ENCODE measurements at regions of chr4 and their contacts with region 1.

Region 1: DNA sequence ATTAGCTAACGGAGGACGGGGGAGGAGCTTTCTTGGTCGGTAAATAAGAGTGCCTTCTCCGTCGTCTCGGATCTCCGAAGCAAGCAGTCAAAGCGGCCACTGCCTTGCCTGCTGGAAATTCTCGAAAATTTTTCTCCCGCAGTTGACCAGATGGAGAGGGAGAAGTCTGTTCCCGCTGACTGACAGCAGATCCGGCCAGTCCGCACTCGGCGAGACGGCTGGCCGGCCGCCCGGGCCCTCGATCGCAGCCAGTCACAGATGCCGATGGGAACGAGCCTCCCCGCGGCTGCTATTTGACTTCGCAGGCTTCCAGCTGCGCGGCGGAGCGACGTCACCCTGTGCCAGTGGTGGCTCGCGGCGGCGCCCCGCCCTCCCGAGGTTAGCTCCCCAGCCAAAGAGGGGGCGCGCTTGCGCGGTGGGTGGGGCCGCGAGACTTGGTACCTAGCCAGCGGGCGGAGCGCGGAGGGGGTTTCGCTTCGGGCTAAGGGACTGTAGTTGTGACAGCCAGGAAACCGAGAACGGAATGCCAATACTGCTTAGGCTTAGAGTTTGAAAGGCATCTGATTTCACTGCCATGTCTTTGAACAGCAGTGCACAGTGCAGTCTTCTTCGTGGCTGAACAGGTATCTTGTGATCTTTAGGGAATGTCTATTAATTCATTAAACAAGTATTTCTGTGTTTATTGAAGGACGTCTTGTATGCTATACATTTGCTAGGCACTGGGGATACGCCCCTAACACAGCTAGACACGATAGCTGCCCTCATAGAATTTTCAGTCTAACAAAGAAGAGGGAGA is at the start of gene PPM1K:
- DNase-seq: peak; percentile 99 to 100 (median 99)
- ATAC-seq: peak; percentile 82
- H3K4me3 ChIP-seq: peak within 1 kb of the TSS; percentile 79 to 99
- H3K4me3 Mint-ChIP-seq: peak within 1 kb of the TSS; percentile 84
- H3K27ac ChIP-seq: peak within 1 kb of the TSS; percentile 97 to 99
- H3K27ac Mint-ChIP-seq: peak within 1 kb of the TSS; percentile 94
- H3K4me1 ChIP-seq: peaks cover 39% of the 10 kb centered on the region
- H3K4me1 Mint-ChIP-seq: peaks cover 46% of the 10 kb centered on the region
- H3K27me3 ChIP-seq: no peaks in the 10 kb centered on the region
- H3K27me3 Mint-ChIP-seq: no peaks in the 10 kb centered on the region
- CTCF ChIP-seq: no peak
- total RNA-seq, gene PPM1K: 59.8 to 61.0 TPM

Region 2: GRCh38 chr4:86934771-86935565 is 1349.7 kb before region 1 on chr4 and contains the start of gene AFF1:
- CTCF ChIA-PET with region 1: no interaction called
- POLR2A ChIA-PET with region 1: interaction called, 3 read pairs
- intact Hi-C with region 1: loop called (anchors 5 to 10 kb)
- DNase-seq: peak; percentile 74 to 97 (median 85)
- ATAC-seq: peak; percentile 71
- H3K4me3 ChIP-seq: peak within 1 kb of the TSS; percentile 76 to 87
- H3K4me3 Mint-ChIP-seq: peak within 1 kb of the TSS; percentile 88
- H3K27ac ChIP-seq: peak within 1 kb of the TSS; percentile 81 to 85
- H3K27ac Mint-ChIP-seq: peak within 1 kb of the TSS; percentile 95
- H3K4me1 ChIP-seq: peaks cover 42% of the 10 kb centered on the region
- H3K4me1 Mint-ChIP-seq: peaks cover 50% of the 10 kb centered on the region
- H3K27me3 ChIP-seq: no peaks in the 10 kb centered on the region
- H3K27me3 Mint-ChIP-seq: no peaks in the 10 kb centered on the region
- CTCF ChIP-seq: peak; percentile 44
- total RNA-seq, gene AFF1: 32.3 to 33.8 TPM

Region 3: DNA sequence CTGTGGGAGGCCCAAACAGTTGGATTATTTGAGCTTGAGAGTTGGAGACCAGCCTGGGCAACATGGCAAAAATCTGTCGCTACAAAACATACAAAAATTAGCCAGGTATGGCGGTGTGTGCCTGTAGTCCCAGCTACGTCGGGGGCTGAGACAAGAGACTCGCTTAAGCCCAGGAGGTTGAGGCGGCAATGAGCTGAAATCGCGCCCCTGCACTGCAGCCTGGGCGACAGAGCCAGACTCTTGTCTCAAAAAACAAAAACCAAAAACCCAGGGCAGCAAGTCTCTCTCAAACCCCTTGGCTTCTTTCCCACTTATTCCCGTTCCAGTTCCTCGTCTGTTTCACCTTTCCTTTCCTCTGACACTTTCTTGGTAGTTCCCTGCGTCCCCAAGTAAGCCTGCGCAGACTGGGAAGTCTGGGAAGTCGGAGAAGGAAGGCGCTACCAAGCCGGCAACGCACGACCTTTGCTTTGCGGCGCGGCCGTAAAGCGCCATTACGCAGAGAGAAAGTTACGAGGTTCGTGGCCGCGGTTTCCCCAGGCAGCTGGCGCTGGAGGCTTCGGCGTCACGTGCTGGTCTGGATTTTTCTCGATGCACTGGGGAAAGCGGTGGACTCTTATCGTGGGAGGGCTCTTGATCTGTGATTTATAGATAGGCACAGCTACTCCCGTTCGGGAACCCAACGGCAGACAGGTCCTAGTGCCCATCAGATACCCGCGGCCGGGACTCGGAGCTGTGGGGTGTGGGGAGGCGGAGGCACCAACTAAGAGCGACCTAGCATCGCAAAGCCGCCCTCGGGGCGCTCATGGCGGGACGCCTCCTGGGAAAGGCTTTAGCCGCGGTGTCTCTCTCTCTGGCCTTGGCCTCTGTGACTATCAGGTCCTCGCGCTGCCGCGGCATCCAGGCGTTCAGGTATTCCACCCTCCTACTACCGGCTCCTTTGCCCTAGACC is 862.3 kb before region 1 on chr4 and contains the start of gene NUDT9:
- CTCF ChIA-PET with region 1: no interaction called
- POLR2A ChIA-PET with region 1: interaction called, 4 read pairs
- intact Hi-C with region 1: loop called in 1 of 2 experiments (anchors 5 kb)
- DNase-seq: peak; percentile 76 to 94 (median 86)
- ATAC-seq: peak; percentile 82
- H3K4me3 ChIP-seq: peak within 1 kb of the TSS; percentile 76 to 94
- H3K4me3 Mint-ChIP-seq: peak within 1 kb of the TSS; percentile 98
- H3K27ac ChIP-seq: peak within 1 kb of the TSS; percentile 86 to 92
- H3K27ac Mint-ChIP-seq: peak within 1 kb of the TSS; percentile 99
- H3K4me1 ChIP-seq: peaks cover 18% of the 10 kb centered on the region
- H3K4me1 Mint-ChIP-seq: peaks cover 39% of the 10 kb centered on the region
- H3K27me3 ChIP-seq: no peaks in the 10 kb centered on the region
- H3K27me3 Mint-ChIP-seq: no peaks in the 10 kb centered on the region
- CTCF ChIP-seq: no peak
- total RNA-seq, gene NUDT9: 4.9 to 6.4 TPM

Region 4: GRCh38 chr4:88320780-88321373 is 36.2 kb after region 1 on chr4:
- CTCF ChIA-PET with region 1: no interaction called
- POLR2A ChIA-PET with region 1: interaction called, 23 read pairs
- intact Hi-C with region 1: loop called in 1 of 2 experiments (anchors 1 kb)
- DNase-seq: peak in 8 of 9 experiments; percentile 7 to 62 (median 26)
- ATAC-seq: peak; percentile 75
- H3K4me3 ChIP-seq: peak overlapping the region in 1 of 2 experiments; percentile 10
- H3K4me3 Mint-ChIP-seq: peak overlapping the region; percentile 84
- H3K27ac ChIP-seq: peak overlapping the region in 1 of 2 experiments; percentile 70
- H3K27ac Mint-ChIP-seq: peak overlapping the region; percentile 95
- H3K4me1 ChIP-seq: peaks cover 18% of the 10 kb centered on the region
- H3K4me1 Mint-ChIP-seq: peaks cover 22% of the 10 kb centered on the region
- H3K27me3 ChIP-seq: no peaks in the 10 kb centered on the region
- H3K27me3 Mint-ChIP-seq: no peaks in the 10 kb centered on the region
- CTCF ChIP-seq: no peak

Region 5: DNA sequence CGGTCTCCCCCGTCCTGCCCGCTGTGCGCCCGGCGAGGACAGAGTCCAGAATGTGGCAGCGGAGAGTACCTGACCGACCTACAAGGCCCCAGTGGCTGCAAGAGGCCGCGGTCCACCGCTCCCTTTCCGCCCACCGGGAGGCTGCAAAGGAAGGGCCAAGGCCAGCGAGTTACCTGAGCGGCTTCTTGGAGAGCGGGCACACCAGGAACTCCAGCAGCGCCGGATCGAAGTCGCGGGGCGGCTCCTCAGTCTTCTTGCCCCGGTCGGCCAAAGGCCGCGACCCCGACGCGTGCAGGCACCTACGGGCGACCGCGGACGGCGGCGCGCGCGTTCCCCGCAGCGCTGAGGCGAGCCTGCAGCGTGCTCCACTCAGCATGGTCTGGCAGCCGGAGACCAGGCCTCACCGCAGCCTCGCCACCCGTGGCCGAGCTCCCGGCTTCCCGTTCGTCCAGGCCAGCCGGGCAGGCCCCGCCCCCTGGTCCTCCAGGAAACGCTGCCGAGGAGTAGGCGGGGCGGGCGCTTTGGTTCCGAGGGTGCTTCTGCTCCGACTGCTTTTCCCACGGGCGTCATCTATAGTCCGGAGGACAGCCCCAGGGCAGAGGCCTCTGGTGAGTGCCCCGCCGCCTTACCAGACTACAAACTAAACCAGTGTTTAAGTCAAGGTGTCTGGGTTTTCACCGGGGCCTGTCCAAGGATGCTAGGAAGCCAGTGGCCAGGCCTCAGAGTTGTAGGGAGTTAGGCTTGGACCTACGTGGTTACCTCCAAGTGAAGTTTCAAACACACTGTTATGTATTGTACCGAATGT is 238.9 kb after region 1 on chr4 and contains the start of gene PYURF:
- CTCF ChIA-PET with region 1: interaction called, 3 read pairs
- POLR2A ChIA-PET with region 1: interaction called, 3 read pairs
- intact Hi-C with region 1: loop called (anchors 2 kb)
- DNase-seq: peak; percentile 31 to 87 (median 75)
- ATAC-seq: peak; percentile 76
- H3K4me3 ChIP-seq: peak within 1 kb of the TSS; percentile 78 to 90
- H3K4me3 Mint-ChIP-seq: peak within 1 kb of the TSS; percentile 93
- H3K27ac ChIP-seq: peak within 1 kb of the TSS; percentile 54 to 76
- H3K27ac Mint-ChIP-seq: peak within 1 kb of the TSS; percentile 94
- H3K4me1 ChIP-seq: peaks cover 16% of the 10 kb centered on the region
- H3K4me1 Mint-ChIP-seq: peaks cover 43% of the 10 kb centered on the region
- H3K27me3 ChIP-seq: no peaks in the 10 kb centered on the region
- H3K27me3 Mint-ChIP-seq: no peaks in the 10 kb centered on the region
- CTCF ChIP-seq: no peak
- total RNA-seq, gene PYURF: 25.5 to 27.6 TPM

Region 6: GRCh38 chr4:88613417-88613875 is 328.8 kb after region 1 on chr4:
- CTCF ChIA-PET with region 1: no interaction called
- POLR2A ChIA-PET with region 1: interaction called, 8 read pairs
- intact Hi-C with region 1: loop called in 1 of 2 experiments (anchors 2 kb)
- DNase-seq: peak in 8 of 9 experiments; percentile 18 to 88 (median 49)
- ATAC-seq: peak; percentile 92
- H3K4me3 ChIP-seq: peak overlapping the region; percentile 16 to 19
- H3K4me3 Mint-ChIP-seq: peak overlapping the region; percentile 78
- H3K27ac ChIP-seq: peak overlapping the region; percentile 64 to 81
- H3K27ac Mint-ChIP-seq: peak overlapping the region; percentile 96
- H3K4me1 ChIP-seq: peaks cover 52% of the 10 kb centered on the region
- H3K4me1 Mint-ChIP-seq: peaks cover 87% of the 10 kb centered on the region
- H3K27me3 ChIP-seq: no peaks in the 10 kb centered on the region
- H3K27me3 Mint-ChIP-seq: no peaks in the 10 kb centered on the region
- CTCF ChIP-seq: no peak

Region 7: DNA sequence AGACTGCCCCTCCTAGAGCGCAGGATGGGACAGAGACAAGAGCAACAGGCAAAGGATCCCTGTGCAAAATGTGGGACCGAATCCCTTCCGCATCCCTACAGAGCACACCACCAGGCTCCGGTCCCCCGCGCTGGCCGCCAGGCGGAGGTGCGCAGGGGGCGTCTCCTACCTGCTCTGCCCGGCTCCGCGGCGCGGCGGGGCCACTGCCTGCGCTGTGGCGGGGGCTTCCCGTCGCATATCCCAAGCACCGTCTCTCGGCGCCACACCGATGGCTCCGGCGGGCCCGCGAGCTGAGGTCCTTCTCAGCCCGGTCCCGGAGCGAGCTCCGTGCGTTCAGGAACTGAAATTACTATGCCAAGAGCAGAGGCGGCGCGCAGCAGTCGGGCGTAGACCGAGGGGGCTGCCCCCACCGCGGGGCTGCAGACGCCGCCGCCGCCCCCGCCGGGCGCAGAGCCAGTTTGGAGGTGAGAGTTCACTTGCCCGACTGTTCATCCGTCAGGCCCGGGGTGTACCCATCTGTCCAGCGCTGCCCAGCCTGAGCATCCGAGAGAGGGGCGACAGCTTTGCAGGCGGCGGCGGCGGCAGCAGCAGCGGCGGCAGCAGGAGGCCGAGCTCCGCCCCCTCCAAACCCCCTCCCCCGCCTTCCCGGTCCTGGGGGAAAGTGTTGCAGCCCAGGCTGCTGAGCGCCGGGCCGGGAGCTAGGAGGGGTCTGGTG is 1023.0 kb after region 1 on chr4 and contains the start of gene GPRIN3:
- CTCF ChIA-PET with region 1: no interaction called
- POLR2A ChIA-PET with region 1: no interaction called
- intact Hi-C with region 1: loop called in 1 of 2 experiments (anchors 10 kb)
- DNase-seq: peak; percentile 39 to 83 (median 68)
- ATAC-seq: peak; percentile 63
- H3K4me3 ChIP-seq: peak within 1 kb of the TSS; percentile 67 to 88
- H3K4me3 Mint-ChIP-seq: peak within 1 kb of the TSS; percentile 93
- H3K27ac ChIP-seq: peak within 1 kb of the TSS; percentile 59 to 70
- H3K27ac Mint-ChIP-seq: peak within 1 kb of the TSS; percentile 90
- H3K4me1 ChIP-seq: peaks cover 38% of the 10 kb centered on the region
- H3K4me1 Mint-ChIP-seq: peaks cover 54% of the 10 kb centered on the region
- H3K27me3 ChIP-seq: no peaks in the 10 kb centered on the region
- H3K27me3 Mint-ChIP-seq: no peaks in the 10 kb centered on the region
- CTCF ChIP-seq: no peak
- total RNA-seq, gene GPRIN3: 32.1 to 34.4 TPM

Region 8: DNA sequence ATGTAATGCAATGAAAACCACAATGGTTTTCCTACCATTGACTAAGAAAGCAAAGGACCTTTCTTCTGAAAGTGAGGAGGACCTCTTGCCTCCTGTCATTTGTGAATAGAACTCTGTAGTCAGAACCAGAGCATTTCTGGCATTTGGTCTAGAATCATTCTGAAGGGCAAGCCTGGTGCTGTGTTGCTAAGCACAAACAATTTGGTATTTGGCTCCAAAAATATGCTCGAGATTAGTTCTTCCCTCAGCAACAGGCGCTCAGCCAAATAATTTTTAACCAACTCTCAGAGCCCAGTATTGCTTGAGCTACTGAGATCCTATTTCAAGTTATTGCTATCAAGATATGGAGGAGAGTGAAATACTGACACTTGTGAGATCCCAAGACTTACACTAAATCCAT is 1481.3 kb after region 1 on chr4:
- CTCF ChIA-PET with region 1: no interaction called
- POLR2A ChIA-PET with region 1: no interaction called
- intact Hi-C with region 1: no loop called
- DNase-seq: no peak
- ATAC-seq: no peak
- H3K4me3 ChIP-seq: no peak overlapping the region
- H3K4me3 Mint-ChIP-seq: no peak overlapping the region
- H3K27ac ChIP-seq: no peak overlapping the region
- H3K27ac Mint-ChIP-seq: no peak overlapping the region
- H3K4me1 ChIP-seq: no peaks in the 10 kb centered on the region
- H3K4me1 Mint-ChIP-seq: no peaks in the 10 kb centered on the region
- H3K27me3 ChIP-seq: no peaks in the 10 kb centered on the region
- H3K27me3 Mint-ChIP-seq: peaks cover 5% of the 10 kb centered on the region
- CTCF ChIP-seq: no peak

Measured in CD8-positive, alpha-beta T cell (primary cell).